ENCODE measurements at regions of chr17 and their contacts with region 1.

Region 1: GRCh38 chr17:14300575-14301278 is at the start of gene HS3ST3B1:
- DNase-seq: peak; percentile 93 to 100 (median 99)
- ATAC-seq: peak; percentile 90
- H3K4me3 ChIP-seq: peak within 1 kb of the TSS; percentile 99
- H3K4me3 Mint-ChIP-seq: peak within 1 kb of the TSS; percentile 85 to 100 (median 96)
- H3K27ac ChIP-seq: peak within 1 kb of the TSS; percentile 63
- H3K27ac Mint-ChIP-seq: peak within 1 kb of the TSS; percentile 86 to 94 (median 90)
- H3K4me1 ChIP-seq: peaks cover 39 to 44% of the 10 kb centered on the region in 2 donors
- H3K4me1 Mint-ChIP-seq: peaks cover 49 to 69% (median 62%) of the 10 kb centered on the region in 7 donors
- H3K27me3 ChIP-seq: peaks cover 10 to 22% of the 10 kb centered on the region in 2 donors
- H3K27me3 Mint-ChIP-seq: peaks cover 29 to 39% (median 37%) of the 10 kb centered on the region in 5 donors
- total RNA-seq, gene HS3ST3B1: 11.7 to 40.7 (median 30.8) TPM

Region 2: DNA sequence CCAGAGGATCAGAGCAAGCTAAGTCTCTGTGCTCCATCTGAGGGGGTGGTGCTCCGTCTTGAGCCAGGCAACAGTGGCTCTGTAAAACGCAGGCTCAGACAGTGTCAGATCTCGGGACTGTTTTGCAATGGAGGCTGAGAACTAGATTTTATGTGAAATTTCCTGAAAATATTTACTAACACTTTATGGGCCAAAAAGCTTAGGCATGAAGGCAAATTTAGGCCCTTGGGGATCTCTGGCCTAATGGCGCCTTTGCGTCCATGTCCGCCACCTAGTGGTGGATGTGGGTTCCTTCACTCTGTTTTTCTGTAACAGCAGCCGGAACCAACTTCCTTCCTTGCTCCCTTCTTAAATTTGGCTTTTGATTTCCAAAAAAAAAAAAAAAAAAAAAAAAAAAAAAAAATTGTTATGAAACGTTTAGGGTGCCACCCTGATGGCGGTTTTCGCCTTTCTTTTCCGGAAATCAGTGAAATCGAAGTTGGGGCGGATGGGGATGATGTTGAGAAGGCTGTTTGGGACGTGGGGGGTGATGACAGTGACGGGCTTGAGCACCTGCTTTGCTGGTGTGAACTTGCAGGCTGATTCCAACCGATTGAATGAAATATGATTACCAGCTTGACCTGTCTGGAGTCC is 1268.9 kb before region 1 on chr17:
- CTCF ChIA-PET with region 1: no interaction called
- POLR2A ChIA-PET with region 1: interaction called, 3 read pairs
- intact Hi-C with region 1: loop called in 1 of 2 experiments (anchors 5 kb)
- DNase-seq: peak in 8 of 9 donors; percentile 34 to 63 (median 54)
- ATAC-seq: peak; percentile 77
- H3K4me3 ChIP-seq: no peak overlapping the region
- H3K4me3 Mint-ChIP-seq: peak overlapping the region in 8 of 10 donors; percentile 18 to 71 (median 42)
- H3K27ac ChIP-seq: no peak overlapping the region
- H3K27ac Mint-ChIP-seq: peak overlapping the region in 8 of 9 donors; percentile 41 to 90 (median 76)
- H3K4me1 ChIP-seq: peaks cover 0 to 12% of the 10 kb centered on the region in 2 donors
- H3K4me1 Mint-ChIP-seq: peaks cover 6 to 29% (median 16%) of the 10 kb centered on the region in 7 donors
- H3K27me3 ChIP-seq: peaks cover 0 to 2% of the 10 kb centered on the region in 2 donors
- H3K27me3 Mint-ChIP-seq: peaks cover 0 to 16% (median 6%) of the 10 kb centered on the region in 5 donors

Region 3: DNA sequence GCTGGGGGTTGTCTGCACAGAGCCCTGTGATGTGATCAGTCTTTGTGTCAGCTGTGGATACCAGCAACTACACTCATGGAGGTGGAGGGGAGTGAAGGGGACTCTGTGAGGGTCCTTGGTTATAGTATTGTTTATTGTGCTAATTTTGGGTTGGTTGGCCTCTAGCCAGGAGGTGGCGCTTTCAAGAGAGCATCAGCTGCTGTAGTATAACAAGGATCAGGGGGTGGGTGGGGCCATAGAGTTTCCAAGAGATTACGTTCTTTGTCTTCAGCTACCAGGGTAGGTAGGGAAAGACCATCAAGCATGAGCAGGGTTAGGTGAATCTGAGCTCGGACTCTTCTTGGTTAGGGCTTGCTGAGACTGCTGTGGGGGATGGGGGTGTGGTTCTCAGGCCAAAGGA is 601.9 kb before region 1 on chr17:
- CTCF ChIA-PET with region 1: no interaction called
- POLR2A ChIA-PET with region 1: no interaction called
- intact Hi-C with region 1: loop called in 1 of 2 experiments (anchors 5 kb)
- DNase-seq: no peak
- ATAC-seq: no peak
- H3K4me3 ChIP-seq: no peak overlapping the region
- H3K4me3 Mint-ChIP-seq: no peak overlapping the region
- H3K27ac ChIP-seq: no peak overlapping the region
- H3K27ac Mint-ChIP-seq: no peak overlapping the region
- H3K4me1 ChIP-seq: no peaks in the 10 kb centered on the region
- H3K4me1 Mint-ChIP-seq: peaks cover 0 to 5% (median 0%) of the 10 kb centered on the region in 7 donors
- H3K27me3 ChIP-seq: no peaks in the 10 kb centered on the region
- H3K27me3 Mint-ChIP-seq: peaks cover 26 to 32% (median 28%) of the 10 kb centered on the region in 5 donors

Region 4: GRCh38 chr17:14118951-14119350 is 181.8 kb before region 1 on chr17:
- CTCF ChIA-PET with region 1: no interaction called
- POLR2A ChIA-PET with region 1: no interaction called
- intact Hi-C with region 1: loop called in 1 of 2 experiments (anchors 1 kb)
- DNase-seq: peak in 3 of 9 donors; percentile 11 to 48 (median 40)
- ATAC-seq: peak; percentile 79
- H3K4me3 ChIP-seq: no peak overlapping the region
- H3K4me3 Mint-ChIP-seq: peak overlapping the region in 5 of 10 donors; percentile 4 to 71 (median 8)
- H3K27ac ChIP-seq: no peak overlapping the region
- H3K27ac Mint-ChIP-seq: peak overlapping the region; percentile 65 to 96 (median 74)
- H3K4me1 ChIP-seq: peaks cover 0 to 7% of the 10 kb centered on the region in 2 donors
- H3K4me1 Mint-ChIP-seq: peaks cover 40 to 89% (median 75%) of the 10 kb centered on the region in 7 donors
- H3K27me3 ChIP-seq: no peaks in the 10 kb centered on the region
- H3K27me3 Mint-ChIP-seq: no peaks in the 10 kb centered on the region

Region 5: GRCh38 chr17:14351493-14351892 is 50.8 kb after region 1 on chr17:
- CTCF ChIA-PET with region 1: no interaction called
- POLR2A ChIA-PET with region 1: no interaction called
- intact Hi-C with region 1: no loop called
- DNase-seq: no peak
- ATAC-seq: peak; percentile 83
- H3K4me3 ChIP-seq: no peak overlapping the region
- H3K4me3 Mint-ChIP-seq: no peak overlapping the region
- H3K27ac ChIP-seq: no peak overlapping the region
- H3K27ac Mint-ChIP-seq: peak overlapping the region in 1 of 9 donors; percentile 23
- H3K4me1 ChIP-seq: no peaks in the 10 kb centered on the region
- H3K4me1 Mint-ChIP-seq: peaks cover 5 to 34% (median 14%) of the 10 kb centered on the region in 7 donors
- H3K27me3 ChIP-seq: no peaks in the 10 kb centered on the region
- H3K27me3 Mint-ChIP-seq: no peaks in the 10 kb centered on the region

Region 6: GRCh38 chr17:14427900-14428647 is 127.3 kb after region 1 on chr17:
- CTCF ChIA-PET with region 1: interaction called, 24 read pairs
- POLR2A ChIA-PET with region 1: interaction called, 64 read pairs
- intact Hi-C with region 1: loop called (anchors 1 to 2 kb)
- DNase-seq: peak in 8 of 9 donors; percentile 33 to 76 (median 70)
- ATAC-seq: peak; percentile 99
- H3K4me3 ChIP-seq: peak overlapping the region; percentile 57
- H3K4me3 Mint-ChIP-seq: peak overlapping the region; percentile 76 to 96 (median 84)
- H3K27ac ChIP-seq: peak overlapping the region; percentile 73
- H3K27ac Mint-ChIP-seq: peak overlapping the region; percentile 68 to 97 (median 95)
- H3K4me1 ChIP-seq: peaks cover 30 to 39% of the 10 kb centered on the region in 2 donors
- H3K4me1 Mint-ChIP-seq: peaks cover 34 to 68% (median 61%) of the 10 kb centered on the region in 7 donors
- H3K27me3 ChIP-seq: no peaks in the 10 kb centered on the region
- H3K27me3 Mint-ChIP-seq: no peaks in the 10 kb centered on the region

Region 7: GRCh38 chr17:15999439-16000350 is 1699.0 kb after region 1 on chr17 and contains the starts of genes TTC19 and ZSWIM7:
- CTCF ChIA-PET with region 1: no interaction called
- POLR2A ChIA-PET with region 1: no interaction called
- intact Hi-C with region 1: loop called in 1 of 2 experiments (anchors 10 kb)
- DNase-seq: peak; percentile 84 to 95 (median 87)
- ATAC-seq: peak; percentile 93
- H3K4me3 ChIP-seq: peak within 1 kb of the TSS; percentile 88
- H3K4me3 Mint-ChIP-seq: peak within 1 kb of the TSS; percentile 87 to 97 (median 94)
- H3K27ac ChIP-seq: peak within 1 kb of the TSS; percentile 86
- H3K27ac Mint-ChIP-seq: peak within 1 kb of the TSS; percentile 91 to 99 (median 96)
- H3K4me1 ChIP-seq: peaks cover 11 to 16% of the 10 kb centered on the region in 2 donors
- H3K4me1 Mint-ChIP-seq: peaks cover 22 to 45% (median 41%) of the 10 kb centered on the region in 7 donors
- H3K27me3 ChIP-seq: no peaks in the 10 kb centered on the region
- H3K27me3 Mint-ChIP-seq: no peaks in the 10 kb centered on the region
- total RNA-seq, gene TTC19: 32.8 to 61.6 (median 37.4) TPM
- total RNA-seq, gene ZSWIM7: 10.0 to 39.6 (median 25.4) TPM

Measured in naive thymus-derived CD4-positive, alpha-beta T cell (primary cell).